ENCODE measurements at regions of chr17 and their contacts with region 1.

Region 1: DNA sequence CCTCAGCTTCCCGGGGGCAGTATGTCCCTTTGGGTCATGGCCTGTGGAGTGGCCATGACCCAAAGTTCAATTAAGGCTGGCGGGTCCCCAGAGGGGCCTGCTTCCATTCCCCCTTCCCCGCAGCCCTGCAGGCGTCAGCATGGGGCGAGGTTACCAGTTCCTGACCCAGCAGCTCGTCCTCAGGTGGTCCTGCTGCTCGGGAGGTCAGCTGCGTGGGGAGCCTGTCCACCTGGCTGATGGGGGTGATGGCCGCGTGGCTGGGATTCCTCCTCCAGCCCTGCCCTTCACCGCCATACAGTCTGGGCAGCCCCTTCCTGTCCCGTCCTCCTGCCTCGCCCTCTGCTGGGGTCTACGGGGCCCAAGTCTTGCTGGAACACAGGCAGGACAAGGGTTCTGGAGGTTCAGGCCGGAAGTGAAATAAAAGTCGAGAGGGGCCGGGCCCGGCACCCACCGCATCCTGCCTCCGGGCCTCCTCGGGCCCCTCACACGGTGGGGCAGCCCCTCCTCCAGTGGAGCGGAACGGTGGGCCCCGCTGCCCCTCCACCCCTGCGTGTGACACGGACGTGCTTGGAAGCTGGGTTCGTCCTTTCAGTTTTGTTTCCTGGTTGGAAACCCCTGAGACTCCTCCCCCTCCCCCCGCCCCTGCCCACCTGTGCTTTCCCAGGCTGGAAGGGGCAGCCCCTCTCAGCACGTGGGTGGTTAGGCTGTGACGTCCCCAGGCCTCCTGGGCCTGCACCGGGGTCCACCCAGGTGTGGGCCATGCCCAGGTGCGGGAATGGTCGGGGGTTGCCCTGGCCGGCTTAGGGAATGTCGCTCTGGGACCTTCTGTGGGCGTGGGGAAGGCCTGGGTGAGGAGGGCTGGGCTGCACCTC is 6.8 kb downstream of the UBALD2 start:
- DNase-seq: peak; percentile 89
- H3K4me3 ChIP-seq: peak overlapping the region; percentile 61
- H3K27ac ChIP-seq: peak overlapping the region; percentile 85
- H3K4me1 ChIP-seq: peaks cover 84% of the 10 kb centered on the region
- CTCF ChIP-seq: no peak

Region 2: DNA sequence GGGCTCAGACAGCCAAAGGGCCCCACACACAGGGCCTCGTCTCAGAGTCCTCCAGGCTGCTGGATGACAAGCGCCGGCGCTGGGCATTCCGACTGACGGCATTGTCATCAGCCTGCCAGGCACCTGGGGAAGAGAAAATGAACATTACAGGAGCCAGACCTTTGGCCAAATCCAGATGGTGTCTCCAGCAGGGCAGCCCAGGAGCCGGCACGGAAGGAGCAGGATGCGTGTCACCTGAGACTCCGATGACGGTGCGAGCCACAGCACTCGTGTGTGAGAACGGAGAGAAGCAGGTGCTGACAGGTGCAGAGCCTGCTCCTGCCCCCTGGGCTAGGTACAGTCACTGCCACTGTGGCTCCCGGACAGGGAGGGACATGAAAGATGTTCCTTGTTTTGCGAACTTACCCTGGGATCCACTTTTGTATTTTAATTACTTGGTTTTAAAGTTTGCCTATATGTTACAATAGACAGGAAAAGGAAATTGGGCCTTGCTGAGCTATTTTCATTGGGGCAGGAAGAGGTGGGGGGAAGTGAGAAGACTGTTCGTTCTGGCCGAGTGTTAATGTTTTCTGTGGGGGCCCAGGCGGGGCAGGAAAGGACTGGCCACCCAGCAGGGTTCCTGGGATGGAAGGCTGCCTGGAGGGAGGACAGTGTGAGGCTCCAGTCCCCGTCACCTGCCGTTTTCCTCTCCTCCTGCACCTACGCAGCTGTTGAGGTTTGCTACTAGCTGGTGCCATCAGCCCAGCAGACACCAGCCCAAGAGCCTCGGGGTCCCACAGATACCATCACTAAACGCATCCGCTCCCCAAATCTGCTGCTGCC is 126.5 kb before region 1 on chr17:
- CTCF ChIA-PET with region 1: interaction called, 3 read pairs
- POLR2A ChIA-PET with region 1: interaction called, 5 read pairs
- intact Hi-C with region 1: loop called (anchors 2 kb)
- DNase-seq: peak; percentile 80
- H3K4me3 ChIP-seq: peak overlapping the region; percentile 48
- H3K27ac ChIP-seq: peak overlapping the region; percentile 70
- H3K4me1 ChIP-seq: peaks cover 66% of the 10 kb centered on the region
- CTCF ChIP-seq: no peak

Measured in OCI-LY7 (cell line).